Activated CD4-positive, alpha-beta T cell treated with anti-CD3 and anti-CD28 coated beads for 36 hours (primary cell): ENCODE measurements at regions of chr6 and their contacts with region 1.

Region 1: DNA sequence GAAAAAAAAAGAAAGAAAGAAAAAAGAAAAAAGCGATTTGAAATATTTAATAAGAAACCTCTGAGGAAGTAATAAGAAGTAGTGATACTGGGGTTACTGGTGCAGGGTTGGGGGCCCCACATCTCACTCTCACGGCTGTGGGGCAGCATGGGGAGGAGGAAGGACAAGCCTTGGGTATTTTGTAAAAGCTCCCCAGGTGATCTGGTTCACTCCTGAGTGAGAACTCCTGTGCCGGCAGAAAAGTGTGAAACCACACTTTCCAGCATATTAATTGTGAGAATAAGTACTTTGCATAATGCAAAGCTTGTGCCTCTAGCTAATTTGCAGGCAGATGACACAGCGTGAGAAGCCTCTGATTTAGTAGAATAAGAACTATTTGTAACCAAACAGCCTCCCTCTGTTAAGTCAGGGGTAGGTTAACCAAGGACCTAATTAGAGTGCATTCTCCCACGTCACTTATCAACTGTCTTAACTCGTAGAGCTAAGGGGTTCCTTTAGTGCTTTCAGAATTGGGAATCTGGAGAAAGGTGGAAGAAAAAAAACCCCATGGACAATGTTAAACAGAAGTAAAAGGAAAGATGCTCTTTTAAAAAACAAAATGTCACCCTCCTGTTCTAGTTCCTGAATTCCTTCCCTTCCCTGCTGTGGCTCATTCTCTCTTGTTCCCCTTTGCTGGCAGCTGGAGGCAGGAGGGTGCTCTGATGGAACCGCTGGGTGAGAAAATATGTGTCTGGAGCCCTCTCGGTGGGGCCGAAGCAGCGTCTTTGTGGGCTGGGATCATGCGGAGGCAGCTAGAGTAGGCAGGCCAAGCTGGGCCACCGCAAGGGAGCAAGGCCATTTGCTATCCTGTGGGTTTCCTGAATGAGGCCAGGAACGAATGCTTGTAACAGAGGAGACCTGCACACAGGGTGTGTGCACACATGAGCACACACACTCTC is 108.7 kb downstream of the FYN start:
- DNase-seq: peak; percentile 77
- ATAC-seq: peak; percentile 53
- H3K4me3 Mint-ChIP-seq: peak overlapping the region; percentile 68
- H3K27ac Mint-ChIP-seq: peak overlapping the region; percentile 99
- H3K4me1 Mint-ChIP-seq: peaks cover 99% of the 10 kb centered on the region
- H3K27me3 Mint-ChIP-seq: no peaks in the 10 kb centered on the region

Region 2: DNA sequence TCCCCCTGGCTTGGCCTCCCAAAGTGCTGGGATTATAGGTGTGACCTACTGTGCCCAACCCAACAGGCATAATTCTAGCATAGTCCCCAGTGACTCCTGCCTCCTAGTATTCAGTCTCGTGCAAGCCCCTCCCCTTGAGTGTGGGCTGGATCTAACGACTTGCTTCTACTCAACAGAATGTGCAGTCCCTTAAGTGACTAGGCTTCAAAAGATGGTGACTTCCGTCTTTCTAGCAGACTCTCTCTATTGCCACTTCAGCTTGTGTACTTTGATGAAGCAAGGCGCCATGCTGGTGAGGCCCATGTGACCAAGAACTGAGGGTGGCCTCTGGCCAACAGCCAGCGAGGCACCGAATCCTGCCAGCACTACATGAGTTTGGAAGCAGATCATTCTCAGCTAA is 49.2 kb before region 1 on chr6:
- CTCF ChIA-PET with region 1: interaction called, 18 read pairs
- POLR2A ChIA-PET with region 1: interaction called, 6 read pairs
- intact Hi-C with region 1: loop called (anchors 2 to 5 kb)
- DNase-seq: peak; percentile 73
- ATAC-seq: peak; percentile 91
- H3K4me3 Mint-ChIP-seq: peak overlapping the region; percentile 11
- H3K27ac Mint-ChIP-seq: peak overlapping the region; percentile 95
- H3K4me1 Mint-ChIP-seq: peaks cover 93% of the 10 kb centered on the region
- H3K27me3 Mint-ChIP-seq: no peaks in the 10 kb centered on the region

Region 3: GRCh38 chr6:111784433-111784832 is 19.9 kb after region 1 on chr6:
- CTCF ChIA-PET with region 1: interaction called, 16 read pairs
- POLR2A ChIA-PET with region 1: interaction called, 8 read pairs
- intact Hi-C with region 1: no loop called
- DNase-seq: no peak
- ATAC-seq: no peak
- H3K4me3 Mint-ChIP-seq: no peak overlapping the region
- H3K27ac Mint-ChIP-seq: peak overlapping the region; percentile 78
- H3K4me1 Mint-ChIP-seq: peaks cover 64% of the 10 kb centered on the region
- H3K27me3 Mint-ChIP-seq: no peaks in the 10 kb centered on the region

Region 4: DNA sequence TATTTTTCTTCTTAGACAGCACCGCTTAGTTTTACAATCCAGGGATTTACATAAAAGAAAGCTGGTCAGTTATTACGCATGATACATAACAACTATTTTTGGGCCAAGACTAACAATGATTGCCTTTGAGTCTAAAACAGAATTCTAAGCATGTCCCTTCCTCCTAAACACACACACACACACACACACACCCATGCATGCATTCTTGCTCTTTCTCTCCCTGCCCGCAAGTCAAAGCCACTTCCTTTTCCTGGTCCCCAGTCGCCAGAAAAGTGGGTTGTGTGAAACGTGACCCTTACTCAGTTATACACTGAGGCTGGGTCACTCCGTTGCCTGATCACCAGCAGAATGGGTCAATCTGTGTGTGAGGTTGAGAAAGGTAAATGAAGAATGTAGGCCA is 77.3 kb after region 1 on chr6:
- CTCF ChIA-PET with region 1: interaction called, 9 read pairs
- POLR2A ChIA-PET with region 1: interaction called, 15 read pairs
- intact Hi-C with region 1: loop called (anchors 1 kb)
- DNase-seq: peak; percentile 67
- ATAC-seq: no peak
- H3K4me3 Mint-ChIP-seq: no peak overlapping the region
- H3K27ac Mint-ChIP-seq: no peak overlapping the region
- H3K4me1 Mint-ChIP-seq: peaks cover 63% of the 10 kb centered on the region
- H3K27me3 Mint-ChIP-seq: no peaks in the 10 kb centered on the region

Region 5: DNA sequence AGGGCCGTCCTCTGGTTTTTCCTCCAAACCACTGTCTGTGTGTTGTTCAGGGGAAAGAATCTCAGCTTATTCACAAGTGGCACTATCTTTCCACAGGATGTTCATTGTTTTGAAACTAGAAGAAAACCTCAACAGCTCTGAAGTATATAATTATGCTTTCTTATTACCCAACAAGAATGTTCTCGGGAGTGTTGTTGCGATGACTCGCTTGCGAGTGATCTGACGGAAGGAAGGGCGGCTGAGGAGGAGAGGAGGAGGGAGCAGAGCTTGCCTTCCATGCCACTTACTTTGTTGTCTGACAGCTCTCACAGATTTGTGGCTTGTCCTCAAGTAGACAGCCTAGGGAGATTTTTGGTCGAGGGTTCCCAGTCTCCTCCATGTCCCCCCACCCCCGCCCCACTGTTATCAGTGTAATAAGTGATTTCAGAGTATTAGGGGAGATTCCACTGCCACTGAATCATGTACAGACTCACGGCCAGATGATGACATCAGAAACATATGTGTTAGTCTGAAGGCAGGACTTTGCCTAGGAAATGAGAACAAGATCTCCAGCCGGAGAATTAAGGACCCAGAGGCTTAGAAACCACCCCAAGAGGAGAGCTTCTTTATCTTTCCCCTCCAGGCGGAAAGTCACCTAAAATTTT is 208.7 kb after region 1 on chr6:
- CTCF ChIA-PET with region 1: interaction called, 4 read pairs
- POLR2A ChIA-PET with region 1: interaction called, 4 read pairs
- intact Hi-C with region 1: loop called (anchors 1 to 5 kb)
- DNase-seq: peak; percentile 80
- ATAC-seq: peak; percentile 84
- H3K4me3 Mint-ChIP-seq: peak overlapping the region; percentile 65
- H3K27ac Mint-ChIP-seq: peak overlapping the region; percentile 90
- H3K4me1 Mint-ChIP-seq: peaks cover 73% of the 10 kb centered on the region
- H3K27me3 Mint-ChIP-seq: no peaks in the 10 kb centered on the region

Region 6: GRCh38 chr6:112043032-112044007 is 278.8 kb after region 1 on chr6:
- CTCF ChIA-PET with region 1: interaction called, 14 read pairs
- POLR2A ChIA-PET with region 1: interaction called, 7 read pairs
- intact Hi-C with region 1: loop called (anchors 2 kb)
- DNase-seq: peak; percentile 96
- ATAC-seq: peak; percentile 91
- H3K4me3 Mint-ChIP-seq: peak overlapping the region; percentile 93
- H3K27ac Mint-ChIP-seq: peak overlapping the region; percentile 98
- H3K4me1 Mint-ChIP-seq: peaks cover 50% of the 10 kb centered on the region
- H3K27me3 Mint-ChIP-seq: no peaks in the 10 kb centered on the region